Mammary epithelial cell (primary cell): ENCODE measurements at regions of chr6 and their contacts with region 1.

Region 1: GRCh38 chr6:40573221-40573620 is 13.9 kb downstream of the LRFN2 start:
- DNase-seq: no peak
- H3K4me3 ChIP-seq: no peak overlapping the region
- H3K27ac ChIP-seq: no peak overlapping the region
- H3K4me1 ChIP-seq: no peaks in the 10 kb centered on the region
- H3K27me3 ChIP-seq: no peaks in the 10 kb centered on the region
- CTCF ChIP-seq: no peak

Region 2: GRCh38 chr6:40492187-40492586 is 81.0 kb before region 1 on chr6:
- CTCF ChIA-PET with region 1: no interaction called
- dilution Hi-C with region 1: loop called (anchors 5 kb)
- in situ Hi-C with region 1: no loop called
- intact Hi-C with region 1: no loop called
- DNase-seq: no peak
- H3K4me3 ChIP-seq: no peak overlapping the region
- H3K27ac ChIP-seq: no peak overlapping the region
- H3K4me1 ChIP-seq: no peaks in the 10 kb centered on the region
- H3K27me3 ChIP-seq: peaks cover 2% of the 10 kb centered on the region
- CTCF ChIP-seq: no peak

Region 3: GRCh38 chr6:40894962-40895799 is 322.0 kb after region 1 on chr6:
- CTCF ChIA-PET with region 1: no interaction called
- dilution Hi-C with region 1: no loop called
- in situ Hi-C with region 1: no loop called
- intact Hi-C with region 1: no loop called
- DNase-seq: peak; percentile 23
- H3K4me3 ChIP-seq: no peak overlapping the region
- H3K27ac ChIP-seq: no peak overlapping the region
- H3K4me1 ChIP-seq: no peaks in the 10 kb centered on the region
- H3K27me3 ChIP-seq: no peaks in the 10 kb centered on the region
- CTCF ChIP-seq: peak; percentile 32 to 69